Transverse colon (tissue), 4 donors: ENCODE measurements at regions of chr6 and their contacts with region 1.

Region 1: GRCh38 chr6:28368522-28368921 is 18.8 kb downstream of the ZKSCAN3 start:
- DNase-seq: no peak
- H3K4me3 ChIP-seq: no peak overlapping the region
- H3K27ac ChIP-seq: no peak overlapping the region
- H3K4me1 ChIP-seq: no peaks in the 10 kb centered on the region
- H3K27me3 ChIP-seq: no peaks in the 10 kb centered on the region
- CTCF ChIP-seq: no peak
- EP300 ChIP-seq: no peak
- POLR2A ChIP-seq: no peak

Region 2: GRCh38 chr6:28402197-28402596 is 33.7 kb after region 1 on chr6:
- in situ Hi-C with region 1: no loop called
- intact Hi-C with region 1: loop called (anchors 1 kb)
- DNase-seq: no peak
- H3K4me3 ChIP-seq: no peak overlapping the region
- H3K27ac ChIP-seq: no peak overlapping the region
- H3K4me1 ChIP-seq: peaks cover 0 to 25% (median 8%) of the 10 kb centered on the region in 4 donors
- H3K27me3 ChIP-seq: peaks cover 54% of the 10 kb centered on the region
- CTCF ChIP-seq: no peak
- EP300 ChIP-seq: no peak
- POLR2A ChIP-seq: no peak